ENCODE measurements at regions of chr2 and their contacts with region 1.

Region 1: GRCh38 chr2:8671802-8672201 is 10.1 kb upstream of the ID2 start:
- DNase-seq: no peak
- ATAC-seq: no peak
- H3K4me3 ChIP-seq: no peak overlapping the region
- H3K27ac ChIP-seq: no peak overlapping the region
- H3K4me1 ChIP-seq: peaks cover 0 to 22% (median 13%) of the 10 kb centered on the region in 12 donors
- H3K27me3 ChIP-seq: peaks cover 0 to 12% (median 0%) of the 10 kb centered on the region in 9 donors
- CTCF ChIP-seq: no peak
- POLR2A ChIP-seq: no peak

Region 2: DNA sequence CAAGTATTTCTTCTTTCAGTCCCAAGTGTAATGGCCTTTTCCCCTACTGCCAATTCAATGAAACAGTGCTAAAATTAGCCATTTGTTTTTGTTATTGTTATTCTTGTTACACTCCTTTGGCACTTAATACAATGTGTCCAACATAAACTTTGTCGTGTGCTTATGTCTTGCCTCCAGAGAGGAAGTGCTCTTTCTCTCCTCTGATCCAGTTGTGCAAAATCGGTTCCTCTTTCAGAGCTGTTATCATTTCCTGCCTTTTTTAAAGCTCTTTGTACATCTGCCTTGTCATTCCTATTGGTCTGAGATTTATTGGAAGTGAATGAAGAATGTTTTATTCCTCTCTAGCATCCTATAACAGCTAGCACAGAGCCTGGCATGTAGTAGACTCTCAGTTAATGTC is 613.1 kb before region 1 on chr2:
- intact Hi-C with region 1: no loop called
- DNase-seq: no peak
- ATAC-seq: peak in 2 of 4 donors; percentile 47 to 50
- H3K4me3 ChIP-seq: no peak overlapping the region
- H3K27ac ChIP-seq: peak overlapping the region in 1 of 12 donors; percentile 50
- H3K4me1 ChIP-seq: peaks cover 0 to 16% (median 0%) of the 10 kb centered on the region in 12 donors
- H3K27me3 ChIP-seq: no peaks in the 10 kb centered on the region
- CTCF ChIP-seq: no peak
- POLR2A ChIP-seq: no peak

Region 3: GRCh38 chr2:8544786-8545694 is 126.8 kb before region 1 on chr2:
- intact Hi-C with region 1: loop called in 3 of 10 experiments (anchors 5 to 10 kb)
- DNase-seq: peak; percentile 71 to 87 (median 79)
- ATAC-seq: peak; percentile 72 to 90 (median 86)
- H3K4me3 ChIP-seq: no peak overlapping the region
- H3K27ac ChIP-seq: peak overlapping the region in 6 of 12 donors; percentile 2 to 97 (median 42)
- H3K4me1 ChIP-seq: peaks cover 0 to 71% (median 25%) of the 10 kb centered on the region in 12 donors
- H3K27me3 ChIP-seq: no peaks in the 10 kb centered on the region
- CTCF ChIP-seq: peak; percentile 5 to 57 (median 32)
- POLR2A ChIP-seq: no peak

Region 4: DNA sequence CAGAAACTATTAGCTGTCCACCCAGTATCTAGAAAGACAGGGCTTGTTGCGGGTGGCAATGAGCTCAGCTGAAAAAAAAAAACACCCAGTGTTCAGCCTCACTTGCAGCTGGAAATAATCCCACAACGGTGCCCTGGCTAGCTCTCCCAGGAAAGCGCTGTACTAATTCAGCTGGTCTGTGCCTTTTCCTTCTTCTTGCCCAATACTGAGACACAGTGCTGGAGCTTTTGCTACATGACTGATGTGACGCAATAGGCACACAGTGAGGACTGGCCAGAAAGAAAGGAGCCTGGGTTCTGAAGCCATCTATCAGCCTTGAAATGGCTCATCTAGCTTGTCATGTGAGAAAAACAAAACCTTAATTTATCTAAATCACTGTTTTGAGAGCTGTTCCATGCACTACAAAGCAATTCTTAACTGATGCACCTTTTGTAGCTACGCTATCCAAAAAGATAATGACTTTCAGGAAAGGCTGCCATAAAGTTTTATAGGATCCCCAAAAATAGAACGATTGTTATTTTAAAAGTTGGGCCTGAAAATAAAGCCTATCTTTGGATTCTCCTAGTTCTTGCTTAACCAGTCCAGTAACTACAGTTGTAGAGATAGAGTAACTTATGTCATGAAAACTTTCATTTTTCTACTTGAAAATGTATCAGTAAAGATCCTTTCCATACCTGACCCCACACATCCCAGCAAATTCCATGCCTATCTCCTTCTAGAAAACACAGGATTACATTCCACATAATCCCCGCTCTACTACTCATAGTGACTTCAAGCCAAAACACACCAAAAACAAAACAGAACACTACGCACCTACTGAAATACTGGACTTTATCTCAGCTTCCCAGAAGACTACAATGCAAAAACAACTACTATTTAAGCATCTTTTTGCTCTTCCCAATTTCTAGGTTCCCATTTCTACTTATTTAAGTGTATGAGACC is 149.7 kb after region 1 on chr2:
- intact Hi-C with region 1: no loop called
- DNase-seq: peak in 3 of 5 donors; percentile 23 to 63 (median 40)
- ATAC-seq: peak; percentile 78 to 96 (median 86)
- H3K4me3 ChIP-seq: no peak overlapping the region
- H3K27ac ChIP-seq: peak overlapping the region in 11 of 12 donors; percentile 17 to 78 (median 60)
- H3K4me1 ChIP-seq: peaks cover 0 to 37% (median 22%) of the 10 kb centered on the region in 12 donors
- H3K27me3 ChIP-seq: no peaks in the 10 kb centered on the region
- CTCF ChIP-seq: no peak
- POLR2A ChIP-seq: no peak